Tibial artery (tissue), 4 donors: ENCODE measurements at regions of chr11 and their contacts with region 1.

Region 1: GRCh38 chr11:40281052-40281580 is 1178.3 kb downstream of the LRRC4C start:
- DNase-seq: no peak
- H3K4me3 ChIP-seq: no peak overlapping the region
- H3K27ac ChIP-seq: no peak overlapping the region
- H3K4me1 ChIP-seq: peaks cover 0 to 4% (median 0%) of the 10 kb centered on the region in 4 donors
- H3K27me3 ChIP-seq: no peaks in the 10 kb centered on the region
- CTCF ChIP-seq: no peak

Region 2: GRCh38 chr11:40340911-40341310 is 59.8 kb after region 1 on chr11:
- intact Hi-C with region 1: loop called (anchors 5 kb)
- DNase-seq: no peak
- H3K4me3 ChIP-seq: no peak overlapping the region
- H3K27ac ChIP-seq: no peak overlapping the region
- H3K4me1 ChIP-seq: no peaks in the 10 kb centered on the region
- H3K27me3 ChIP-seq: no peaks in the 10 kb centered on the region
- CTCF ChIP-seq: no peak